ENCODE measurements at regions of chr14 and their contacts with region 1.

Region 1: DNA sequence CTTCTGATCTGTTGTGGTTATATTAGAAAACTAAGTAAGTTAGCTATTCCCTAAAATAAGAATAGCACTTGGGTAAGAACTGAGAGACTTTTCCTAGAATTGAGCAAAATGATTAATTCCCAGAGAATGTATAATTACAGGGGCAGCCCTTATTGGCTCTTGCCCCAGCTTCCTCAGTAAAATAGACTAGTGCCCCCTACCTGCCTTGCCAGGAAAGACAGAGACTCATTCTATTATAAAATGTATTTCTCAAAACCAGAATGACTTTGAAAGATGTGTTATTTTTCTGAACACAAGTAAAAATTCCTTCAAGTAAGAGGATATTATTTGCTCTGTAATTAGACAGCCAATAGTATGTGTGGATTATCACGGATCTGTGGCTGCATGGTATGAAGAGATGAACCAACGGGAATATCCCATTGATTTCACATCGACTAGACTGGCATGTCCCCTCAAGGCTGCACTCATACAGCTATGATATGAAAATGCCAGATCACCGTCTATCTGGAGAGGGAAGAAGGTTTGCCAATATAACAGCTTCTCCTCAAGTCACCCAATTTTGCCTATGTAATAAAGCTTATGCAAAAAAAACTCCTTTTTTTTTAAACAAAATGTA is 7.4 kb upstream of the GLRX5 start:
- DNase-seq: peak in 16 of 35 experiments; percentile 27 to 72 (median 46)
- ATAC-seq: peak in 1 of 4 experiments; percentile 34
- H3K4me3 ChIP-seq: no peak overlapping the region
- H3K4me3 Mint-ChIP-seq: no peak overlapping the region
- H3K27ac ChIP-seq: no peak overlapping the region
- H3K27ac Mint-ChIP-seq: peak overlapping the region; percentile 83 to 89
- H3K4me1 ChIP-seq: peaks cover 35 to 41% of the 10 kb centered on the region in 2 experiments
- H3K4me1 Mint-ChIP-seq: peaks cover 71 to 73% (median 73%) of the 10 kb centered on the region in 3 donors
- H3K27me3 ChIP-seq: no peaks in the 10 kb centered on the region
- H3K27me3 Mint-ChIP-seq: no peaks in the 10 kb centered on the region

Region 2: GRCh38 chr14:95361373-95362137 is 165.9 kb before region 1 on chr14:
- CTCF ChIA-PET with region 1: no interaction called
- POLR2A ChIA-PET with region 1: no interaction called
- DNase-seq: peak in 8 of 35 experiments; percentile 1 to 33 (median 6)
- ATAC-seq: peak in 1 of 4 experiments; percentile 19
- H3K4me3 ChIP-seq: no peak overlapping the region
- H3K4me3 Mint-ChIP-seq: no peak overlapping the region
- H3K27ac ChIP-seq: no peak overlapping the region
- H3K27ac Mint-ChIP-seq: no peak overlapping the region
- H3K4me1 ChIP-seq: peaks cover 0 to 6% of the 10 kb centered on the region in 2 experiments
- H3K4me1 Mint-ChIP-seq: no peaks in the 10 kb centered on the region
- H3K27me3 ChIP-seq: peaks cover 9 to 54% of the 10 kb centered on the region in 2 experiments
- H3K27me3 Mint-ChIP-seq: peaks cover 44 to 50% of the 10 kb centered on the region in 2 donors

Region 3: DNA sequence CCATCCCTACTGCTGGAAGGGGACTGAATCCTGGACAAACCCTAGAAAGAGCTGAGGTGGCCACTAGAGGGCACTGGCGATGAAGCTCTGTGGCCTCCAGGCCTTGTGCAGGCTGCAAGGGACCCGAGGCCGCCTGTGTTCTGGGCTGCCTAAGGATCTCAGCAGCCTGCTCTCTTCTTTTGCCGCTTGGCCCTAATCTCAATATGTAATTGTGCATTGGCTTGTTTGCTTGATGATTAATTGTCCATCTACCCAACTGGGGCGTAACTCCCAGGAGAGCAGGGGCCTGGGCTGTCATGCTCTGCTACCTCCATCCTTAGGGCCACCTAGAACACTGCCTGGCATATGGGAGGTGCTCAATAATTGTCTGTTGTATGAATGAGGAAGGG is 84.9 kb before region 1 on chr14:
- CTCF ChIA-PET with region 1: interaction called, 8 to 75 read pairs
- POLR2A ChIA-PET with region 1: no interaction called
- DNase-seq: peak; percentile 32 to 85 (median 67)
- ATAC-seq: peak; percentile 87 to 97 (median 94)
- H3K4me3 ChIP-seq: no peak overlapping the region
- H3K4me3 Mint-ChIP-seq: no peak overlapping the region
- H3K27ac ChIP-seq: no peak overlapping the region
- H3K27ac Mint-ChIP-seq: peak overlapping the region in 1 of 2 donors; percentile 44
- H3K4me1 ChIP-seq: peaks cover 0 to 6% of the 10 kb centered on the region in 2 experiments
- H3K4me1 Mint-ChIP-seq: peaks cover 4 to 7% (median 6%) of the 10 kb centered on the region in 3 donors
- H3K27me3 ChIP-seq: no peaks in the 10 kb centered on the region
- H3K27me3 Mint-ChIP-seq: no peaks in the 10 kb centered on the region

Region 4: GRCh38 chr14:95452176-95452892 is 75.2 kb before region 1 on chr14:
- CTCF ChIA-PET with region 1: interaction called, 6 to 12 read pairs
- POLR2A ChIA-PET with region 1: no interaction called
- DNase-seq: peak in 1 of 35 experiments; percentile 18
- ATAC-seq: peak in 2 of 4 experiments; percentile 38 to 46
- H3K4me3 ChIP-seq: no peak overlapping the region
- H3K4me3 Mint-ChIP-seq: no peak overlapping the region
- H3K27ac ChIP-seq: no peak overlapping the region
- H3K27ac Mint-ChIP-seq: no peak overlapping the region
- H3K4me1 ChIP-seq: no peaks in the 10 kb centered on the region
- H3K4me1 Mint-ChIP-seq: peaks cover 0 to 4% (median 0%) of the 10 kb centered on the region in 3 donors
- H3K27me3 ChIP-seq: no peaks in the 10 kb centered on the region
- H3K27me3 Mint-ChIP-seq: no peaks in the 10 kb centered on the region

Region 5: GRCh38 chr14:95463171-95463901 is 64.2 kb before region 1 on chr14:
- CTCF ChIA-PET with region 1: interaction called, 3 to 19 read pairs
- POLR2A ChIA-PET with region 1: no interaction called
- DNase-seq: peak; percentile 22 to 76 (median 47)
- ATAC-seq: peak; percentile 79 to 86 (median 84)
- H3K4me3 ChIP-seq: peak overlapping the region in 1 of 2 donors; percentile 35
- H3K4me3 Mint-ChIP-seq: peak overlapping the region; percentile 51 to 71 (median 59)
- H3K27ac ChIP-seq: peak overlapping the region; percentile 69
- H3K27ac Mint-ChIP-seq: peak overlapping the region; percentile 88 to 97
- H3K4me1 ChIP-seq: peaks cover 29 to 71% of the 10 kb centered on the region in 2 experiments
- H3K4me1 Mint-ChIP-seq: peaks cover 60 to 78% (median 72%) of the 10 kb centered on the region in 3 donors
- H3K27me3 ChIP-seq: no peaks in the 10 kb centered on the region
- H3K27me3 Mint-ChIP-seq: no peaks in the 10 kb centered on the region

Region 6: DNA sequence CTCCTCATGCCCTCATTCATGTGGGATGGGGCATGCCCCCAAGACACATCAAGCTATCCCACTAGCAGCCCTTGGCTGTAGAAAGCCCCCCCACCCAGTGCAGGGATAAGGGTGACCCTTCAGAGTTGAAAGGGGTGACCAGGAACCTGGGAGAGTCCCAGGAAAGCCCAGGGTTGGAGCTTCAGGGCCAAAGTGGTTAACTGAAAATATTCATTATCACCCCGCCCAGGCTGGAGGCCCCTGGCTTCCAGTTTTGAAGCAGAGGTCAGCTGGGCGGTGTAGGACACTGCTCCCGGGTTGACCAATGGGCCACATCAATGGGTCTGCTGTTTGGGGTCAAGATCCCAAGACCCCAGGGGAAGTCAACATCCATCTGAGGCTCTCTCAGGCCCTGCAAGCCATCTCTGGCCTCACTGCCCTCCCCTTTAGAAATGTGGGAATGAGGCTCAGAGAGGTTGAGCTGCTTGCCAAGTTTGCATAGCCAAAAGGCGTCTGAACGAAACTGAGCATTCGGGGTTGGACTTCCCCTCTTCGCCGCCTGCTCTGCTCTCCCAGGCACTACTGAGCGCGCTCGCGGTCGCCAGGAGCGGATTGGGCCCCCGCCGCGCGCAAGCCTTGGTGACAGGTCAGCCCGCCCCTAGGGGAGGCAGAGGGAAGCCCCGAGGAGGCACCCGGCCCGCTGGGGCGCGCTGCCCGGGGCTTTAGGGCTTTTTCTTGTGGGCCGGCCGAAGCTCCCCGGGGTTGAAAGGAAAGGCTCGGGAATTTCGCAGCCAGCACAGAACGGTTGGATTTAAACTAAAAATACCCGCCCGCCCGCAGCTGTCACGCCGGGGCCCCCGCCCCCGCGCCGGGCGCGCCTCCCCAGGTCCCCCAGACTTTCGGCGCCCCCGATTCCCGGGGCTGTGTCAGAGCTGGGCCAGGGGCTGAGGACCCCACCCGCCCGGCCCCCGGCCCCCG is 11.6 kb before region 1 on chr14:
- CTCF ChIA-PET with region 1: interaction called in 1 of 2 experiments, 20 read pairs
- POLR2A ChIA-PET with region 1: interaction called in 1 of 2 experiments, 6 read pairs
- DNase-seq: peak; percentile 61 to 92 (median 81)
- ATAC-seq: peak; percentile 78 to 92 (median 80)
- H3K4me3 ChIP-seq: peak overlapping the region; percentile 63 to 77
- H3K4me3 Mint-ChIP-seq: peak overlapping the region; percentile 84 to 90 (median 88)
- H3K27ac ChIP-seq: peak overlapping the region; percentile 76
- H3K27ac Mint-ChIP-seq: peak overlapping the region; percentile 91 to 92
- H3K4me1 ChIP-seq: peaks cover 31 to 70% of the 10 kb centered on the region in 2 experiments
- H3K4me1 Mint-ChIP-seq: peaks cover 67 to 77% (median 73%) of the 10 kb centered on the region in 3 donors
- H3K27me3 ChIP-seq: no peaks in the 10 kb centered on the region
- H3K27me3 Mint-ChIP-seq: no peaks in the 10 kb centered on the region

Region 7: DNA sequence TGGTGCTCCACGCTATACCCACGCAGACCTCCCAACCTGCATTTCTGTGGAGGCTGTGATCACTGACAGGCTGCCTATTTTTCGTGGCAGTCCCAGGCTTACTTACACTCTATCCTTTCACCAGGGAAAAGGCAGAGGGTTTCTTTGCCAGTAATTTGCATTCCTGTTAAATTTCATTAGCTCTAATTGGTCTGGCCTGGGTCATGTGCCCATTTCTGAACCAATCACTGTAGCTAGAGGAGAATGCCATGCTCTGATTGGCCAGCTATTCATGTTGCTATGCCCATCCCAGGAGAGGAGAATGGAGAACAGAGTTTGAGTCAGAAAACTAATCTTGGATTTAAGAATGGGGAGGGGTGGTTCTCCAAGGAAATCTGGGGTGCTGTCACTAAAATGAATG is 305.9 kb after region 1 on chr14:
- CTCF ChIA-PET with region 1: no interaction called
- POLR2A ChIA-PET with region 1: no interaction called
- DNase-seq: no peak
- ATAC-seq: no peak
- H3K4me3 ChIP-seq: no peak overlapping the region
- H3K4me3 Mint-ChIP-seq: no peak overlapping the region
- H3K27ac ChIP-seq: no peak overlapping the region
- H3K27ac Mint-ChIP-seq: no peak overlapping the region
- H3K4me1 ChIP-seq: no peaks in the 10 kb centered on the region
- H3K4me1 Mint-ChIP-seq: no peaks in the 10 kb centered on the region
- H3K27me3 ChIP-seq: peaks cover 0 to 19% of the 10 kb centered on the region in 2 experiments
- H3K27me3 Mint-ChIP-seq: peaks cover 24 to 29% of the 10 kb centered on the region in 2 donors

Measured in T-cell (primary cell).